ENCODE measurements at regions of chr13 and their contacts with region 1.

Region 1: GRCh38 chr13:106567474-106568298 is at the start of gene ARGLU1:
- DNase-seq: peak; percentile 64
- ATAC-seq: peak; percentile 85
- H3K4me3 ChIP-seq: peak within 1 kb of the TSS; percentile 83
- H3K27ac ChIP-seq: peak within 1 kb of the TSS; percentile 96
- H3K4me1 ChIP-seq: peaks cover 13% of the 10 kb centered on the region
- H3K27me3 ChIP-seq: no peaks in the 10 kb centered on the region
- CTCF ChIP-seq: no peak
- EP300 ChIP-seq: no peak
- POLR2A ChIP-seq: peak; percentile 93
- RAD21 ChIP-seq: no peak
- polyA plus RNA-seq, gene ARGLU1: 47.1 to 70.3 TPM

Region 2: DNA sequence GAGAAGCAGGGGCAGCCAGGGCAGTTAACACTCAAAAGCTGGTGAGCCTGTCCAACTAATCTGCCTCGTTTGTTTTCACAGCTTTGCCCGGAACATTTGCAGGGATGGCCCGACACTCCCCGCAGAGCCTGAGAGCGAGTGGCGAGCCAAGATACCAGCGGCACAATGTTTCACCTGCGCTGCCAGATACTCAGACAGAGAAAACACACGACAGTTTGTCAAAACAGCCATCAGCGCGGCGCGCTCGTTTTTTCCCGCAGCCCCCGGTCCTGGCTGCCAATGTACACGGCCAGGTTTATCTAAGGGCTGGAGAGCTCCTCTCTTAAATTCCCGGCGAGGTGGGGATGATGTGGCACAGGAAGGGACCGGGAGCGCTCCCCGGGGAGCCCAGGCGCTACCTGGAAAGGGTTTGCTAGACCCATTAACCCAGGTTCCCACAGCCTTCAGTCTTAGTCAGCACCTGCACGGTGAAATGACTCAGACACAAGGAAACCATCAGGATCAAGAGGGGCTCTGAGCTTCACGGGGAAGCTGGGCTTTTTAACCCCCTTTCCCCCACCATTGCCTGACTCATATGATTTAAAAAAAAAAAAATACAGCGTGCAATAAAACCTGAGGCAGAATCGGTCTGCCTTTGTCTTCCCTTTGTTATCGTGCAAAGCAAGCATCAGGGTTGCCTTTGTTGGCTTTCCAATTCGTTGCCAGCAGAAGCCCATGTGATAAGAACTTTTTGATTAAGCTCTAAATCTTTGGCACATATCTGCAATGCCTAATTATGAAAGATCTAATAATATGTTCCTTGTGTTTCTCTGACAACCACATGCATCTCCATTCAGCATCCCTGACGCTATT is 218.4 kb before region 1 on chr13:
- CTCF ChIA-PET with region 1: no interaction called
- POLR2A ChIA-PET with region 1: no interaction called
- RAD21 ChIA-PET with region 1: no interaction called
- SMC1A ChIA-PET with region 1: no interaction called
- in situ Hi-C with region 1: no loop called
- intact Hi-C with region 1: no loop called
- DNase-seq: no peak
- ATAC-seq: peak; percentile 57
- H3K4me3 ChIP-seq: no peak overlapping the region
- H3K27ac ChIP-seq: no peak overlapping the region
- H3K4me1 ChIP-seq: no peaks in the 10 kb centered on the region; the same call in 1 of the 2 replicates
- H3K27me3 ChIP-seq: no peaks in the 10 kb centered on the region; a peak in 1 of 4 replicates
- CTCF ChIP-seq: no peak
- EP300 ChIP-seq: no peak
- POLR2A ChIP-seq: no peak
- RAD21 ChIP-seq: no peak

Region 3: DNA sequence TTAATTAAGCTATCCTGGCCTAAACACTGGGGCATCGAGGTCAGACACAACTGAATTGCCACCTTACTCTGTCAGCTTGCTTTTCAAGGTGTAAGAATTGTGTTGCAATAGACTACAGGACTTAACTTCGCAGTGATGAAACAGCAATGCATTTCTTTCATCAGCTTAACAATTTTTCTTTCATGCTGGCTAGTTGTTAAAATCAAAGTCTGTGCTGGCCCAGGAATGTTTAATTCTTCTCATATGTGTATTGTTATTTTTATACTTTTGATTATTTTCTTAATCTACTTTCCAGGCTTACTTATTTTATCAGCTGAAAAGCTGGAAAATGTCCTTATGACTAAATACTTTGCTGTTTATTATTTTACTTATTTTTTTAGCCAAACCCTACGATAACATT is 111.9 kb before region 1 on chr13:
- CTCF ChIA-PET with region 1: no interaction called
- POLR2A ChIA-PET with region 1: no interaction called
- RAD21 ChIA-PET with region 1: no interaction called
- SMC1A ChIA-PET with region 1: no interaction called
- in situ Hi-C with region 1: no loop called
- intact Hi-C with region 1: no loop called
- DNase-seq: no peak
- ATAC-seq: no peak
- H3K4me3 ChIP-seq: no peak overlapping the region
- H3K27ac ChIP-seq: no peak overlapping the region
- H3K4me1 ChIP-seq: no peaks in the 10 kb centered on the region
- H3K27me3 ChIP-seq: no peaks in the 10 kb centered on the region
- CTCF ChIP-seq: no peak
- EP300 ChIP-seq: no peak
- POLR2A ChIP-seq: no peak
- RAD21 ChIP-seq: no peak

Region 4: DNA sequence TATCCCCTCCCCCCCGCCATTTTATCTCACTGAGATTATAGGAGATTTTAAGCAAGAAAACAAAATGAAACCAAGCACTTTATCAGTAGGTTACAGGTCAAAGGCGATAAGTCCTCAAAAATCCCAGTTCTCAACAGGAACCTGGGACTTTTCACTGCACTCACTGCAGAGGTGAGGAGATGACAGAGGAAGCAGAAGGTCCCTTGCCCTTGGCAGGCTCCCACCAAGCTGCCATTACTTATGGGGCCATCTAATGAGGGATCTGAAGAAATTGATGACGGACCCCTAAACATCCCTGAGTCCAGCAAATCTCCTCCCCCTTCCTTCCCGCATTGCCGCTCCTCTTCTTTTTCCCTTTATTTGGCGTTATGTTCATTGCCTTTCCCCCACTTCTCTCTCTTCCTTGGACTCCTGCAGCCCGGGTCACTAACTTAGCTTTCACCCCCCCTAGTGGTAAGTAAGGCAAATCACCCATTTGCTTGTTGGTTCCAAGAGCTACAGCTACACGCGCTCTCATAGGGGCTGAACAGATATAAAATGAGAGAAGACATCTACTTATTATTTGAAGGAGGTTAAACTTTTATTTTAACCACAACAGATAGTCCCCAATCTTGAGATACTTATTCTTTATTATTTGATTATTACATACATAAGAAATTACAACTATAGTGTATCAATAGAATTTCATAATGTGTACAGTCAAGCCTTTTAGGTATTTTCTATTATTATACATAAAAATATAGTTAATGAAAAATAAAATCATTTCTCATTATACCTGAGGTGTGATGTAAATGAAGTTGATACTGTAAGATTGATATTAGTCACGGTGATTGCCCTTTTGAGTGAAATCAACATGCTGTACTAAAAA is 52.2 kb after region 1 on chr13:
- CTCF ChIA-PET with region 1: interaction called, 11 read pairs
- POLR2A ChIA-PET with region 1: no interaction called
- RAD21 ChIA-PET with region 1: interaction called, 9 read pairs
- SMC1A ChIA-PET with region 1: interaction called, 4 read pairs
- in situ Hi-C with region 1: no loop called
- intact Hi-C with region 1: no loop called
- DNase-seq: peak; percentile 2
- ATAC-seq: peak; percentile 99
- H3K4me3 ChIP-seq: no peak overlapping the region
- H3K27ac ChIP-seq: no peak overlapping the region
- H3K4me1 ChIP-seq: no peaks in the 10 kb centered on the region
- H3K27me3 ChIP-seq: peaks cover 0 to 2% of the 10 kb centered on the region in 2 experiments; a peak in 1 of 4 replicates
- CTCF ChIP-seq: peak; percentile 77 to 86 (median 79)
- EP300 ChIP-seq: no peak
- POLR2A ChIP-seq: no peak
- RAD21 ChIP-seq: peak; percentile 88

Region 5: GRCh38 chr13:106986033-106986484 is 418.4 kb after region 1 on chr13:
- CTCF ChIA-PET with region 1: no interaction called
- POLR2A ChIA-PET with region 1: no interaction called
- RAD21 ChIA-PET with region 1: no interaction called
- SMC1A ChIA-PET with region 1: no interaction called
- in situ Hi-C with region 1: no loop called
- intact Hi-C with region 1: no loop called
- DNase-seq: no peak
- ATAC-seq: no peak
- H3K4me3 ChIP-seq: no peak overlapping the region
- H3K27ac ChIP-seq: no peak overlapping the region
- H3K4me1 ChIP-seq: no peaks in the 10 kb centered on the region
- H3K27me3 ChIP-seq: no peaks in the 10 kb centered on the region
- CTCF ChIP-seq: no peak
- EP300 ChIP-seq: no peak
- POLR2A ChIP-seq: no peak
- RAD21 ChIP-seq: no peak

Region 6: GRCh38 chr13:108218044-108218974 is 1650.6 kb after region 1 on chr13 and contains the start of gene ABHD13:
- CTCF ChIA-PET with region 1: no interaction called
- POLR2A ChIA-PET with region 1: no interaction called
- RAD21 ChIA-PET with region 1: no interaction called
- SMC1A ChIA-PET with region 1: no interaction called
- in situ Hi-C with region 1: loop called (anchors 25 kb)
- intact Hi-C with region 1: loop called (anchors 5 kb)
- DNase-seq: peak; percentile 54
- ATAC-seq: peak; percentile 85
- H3K4me3 ChIP-seq: peak within 1 kb of the TSS; percentile 83
- H3K27ac ChIP-seq: peak within 1 kb of the TSS; percentile 87
- H3K4me1 ChIP-seq: peaks cover 19% of the 10 kb centered on the region
- H3K27me3 ChIP-seq: no peaks in the 10 kb centered on the region
- CTCF ChIP-seq: no peak
- EP300 ChIP-seq: peak in 1 of 2 experiments; percentile 26; a peak in 1 of 4 replicates
- POLR2A ChIP-seq: peak; percentile 88
- RAD21 ChIP-seq: no peak
- polyA plus RNA-seq, gene ABHD13: 3.2 to 3.9 TPM